CD4-positive, alpha-beta T cell (primary cell): ENCODE measurements at regions of chr6 and their contacts with region 1.

Region 1: GRCh38 chr6:152170705-152171667 is 363.5 kb downstream of the ESR1 start:
- DNase-seq: peak in 9 of 14 experiments; percentile 19 to 80 (median 41)
- ATAC-seq: peak; percentile 85
- H3K4me3 ChIP-seq: peak overlapping the region; percentile 26
- H3K4me3 Mint-ChIP-seq: peak overlapping the region; percentile 62
- H3K27ac ChIP-seq: peak overlapping the region; percentile 46 to 80
- H3K27ac Mint-ChIP-seq: peak overlapping the region; percentile 91
- H3K4me1 ChIP-seq: peaks cover 29% of the 10 kb centered on the region
- H3K4me1 Mint-ChIP-seq: peaks cover 74% of the 10 kb centered on the region
- H3K27me3 ChIP-seq: no peaks in the 10 kb centered on the region
- H3K27me3 Mint-ChIP-seq: no peaks in the 10 kb centered on the region
- CTCF ChIP-seq: no peak

Region 2: DNA sequence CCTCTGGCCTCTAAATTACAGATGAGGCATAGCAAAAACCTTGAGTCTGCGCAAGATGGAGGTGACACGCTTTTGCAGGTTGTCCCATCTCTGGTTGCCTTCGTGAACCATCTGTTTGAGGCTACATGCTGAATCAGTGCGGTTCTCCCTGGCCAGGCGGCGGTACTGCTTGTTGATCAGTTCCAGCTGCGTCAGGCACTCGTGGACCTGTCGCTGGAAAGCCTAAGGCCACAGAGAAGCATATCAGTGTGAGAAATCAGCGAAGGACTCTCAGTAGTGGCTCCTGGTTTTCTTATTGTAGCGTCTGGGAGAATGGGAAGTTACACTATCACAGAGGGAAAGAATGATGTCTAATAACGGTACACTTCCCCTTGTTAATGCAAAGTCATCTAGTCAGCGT is 19.1 kb before region 1 on chr6:
- CTCF ChIA-PET with region 1: no interaction called
- POLR2A ChIA-PET with region 1: interaction called, 13 read pairs
- intact Hi-C with region 1: no loop called
- DNase-seq: no peak
- ATAC-seq: no peak
- H3K4me3 ChIP-seq: no peak overlapping the region
- H3K4me3 Mint-ChIP-seq: no peak overlapping the region
- H3K27ac ChIP-seq: no peak overlapping the region
- H3K27ac Mint-ChIP-seq: peak overlapping the region; percentile 47
- H3K4me1 ChIP-seq: no peaks in the 10 kb centered on the region
- H3K4me1 Mint-ChIP-seq: no peaks in the 10 kb centered on the region
- H3K27me3 ChIP-seq: no peaks in the 10 kb centered on the region
- H3K27me3 Mint-ChIP-seq: no peaks in the 10 kb centered on the region
- CTCF ChIP-seq: no peak

Region 3: DNA sequence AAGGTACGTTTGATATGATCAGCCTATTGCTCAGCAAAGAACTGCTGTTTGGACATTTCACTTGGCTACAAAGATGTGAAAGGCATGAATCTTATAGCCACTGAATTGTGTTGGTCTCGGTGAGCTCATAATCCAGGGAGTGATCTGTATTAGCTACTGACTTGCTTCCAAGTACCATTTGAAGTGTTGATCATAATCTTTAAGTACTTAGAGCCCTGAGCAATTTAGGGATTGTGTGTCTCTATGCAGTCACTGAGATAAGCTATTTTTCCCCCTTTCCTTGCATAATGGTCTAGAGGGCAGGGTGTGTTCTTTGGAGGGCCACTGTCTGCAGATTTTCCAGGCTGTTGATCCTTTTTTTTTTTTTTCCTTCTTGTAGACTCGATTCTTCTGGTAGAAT is 30.1 kb after region 1 on chr6:
- CTCF ChIA-PET with region 1: no interaction called
- POLR2A ChIA-PET with region 1: no interaction called
- intact Hi-C with region 1: loop called in 1 of 2 experiments (anchors 5 kb)
- DNase-seq: no peak
- ATAC-seq: no peak
- H3K4me3 ChIP-seq: no peak overlapping the region
- H3K4me3 Mint-ChIP-seq: no peak overlapping the region
- H3K27ac ChIP-seq: no peak overlapping the region
- H3K27ac Mint-ChIP-seq: no peak overlapping the region
- H3K4me1 ChIP-seq: no peaks in the 10 kb centered on the region
- H3K4me1 Mint-ChIP-seq: peaks cover 10% of the 10 kb centered on the region
- H3K27me3 ChIP-seq: no peaks in the 10 kb centered on the region
- H3K27me3 Mint-ChIP-seq: no peaks in the 10 kb centered on the region
- CTCF ChIP-seq: no peak